ENCODE measurements at regions of chr11 and their contacts with region 1.

Region 1: GRCh38 chr11:119594639-119595249 is 134.3 kb downstream of the NECTIN1 start:
- DNase-seq: peak; percentile 85
- ATAC-seq: peak; percentile 28
- H3K4me3 ChIP-seq: no peak overlapping the region; the same call in 1 of the 2 replicates
- H3K27ac ChIP-seq: peak overlapping the region; percentile 73
- H3K4me1 ChIP-seq: peaks cover 62% of the 10 kb centered on the region
- H3K27me3 ChIP-seq: no peaks in the 10 kb centered on the region
- CTCF ChIP-seq: no peak

Region 2: GRCh38 chr11:118547132-118547531 is 1047.6 kb before region 1 on chr11:
- CTCF ChIA-PET with region 1: no interaction called
- POLR2A ChIA-PET with region 1: no interaction called
- intact Hi-C with region 1: no loop called
- DNase-seq: no peak
- ATAC-seq: no peak
- H3K4me3 ChIP-seq: no peak overlapping the region
- H3K27ac ChIP-seq: no peak overlapping the region
- H3K4me1 ChIP-seq: no peaks in the 10 kb centered on the region
- H3K27me3 ChIP-seq: no peaks in the 10 kb centered on the region
- CTCF ChIP-seq: no peak

Region 3: GRCh38 chr11:119550053-119550752 is 44.5 kb before region 1 on chr11:
- CTCF ChIA-PET with region 1: no interaction called
- POLR2A ChIA-PET with region 1: no interaction called
- intact Hi-C with region 1: no loop called
- DNase-seq: no peak
- ATAC-seq: no peak
- H3K4me3 ChIP-seq: no peak overlapping the region
- H3K27ac ChIP-seq: no peak overlapping the region
- H3K4me1 ChIP-seq: no peaks in the 10 kb centered on the region
- H3K27me3 ChIP-seq: no peaks in the 10 kb centered on the region
- CTCF ChIP-seq: no peak

Region 4: GRCh38 chr11:119615003-119615881 is 20.5 kb after region 1 on chr11:
- CTCF ChIA-PET with region 1: no interaction called
- POLR2A ChIA-PET with region 1: no interaction called
- intact Hi-C with region 1: loop called (anchors 2 kb)
- DNase-seq: peak; percentile 97
- ATAC-seq: peak; percentile 98
- H3K4me3 ChIP-seq: no peak overlapping the region
- H3K27ac ChIP-seq: peak overlapping the region; percentile 85
- H3K4me1 ChIP-seq: peaks cover 27% of the 10 kb centered on the region
- H3K27me3 ChIP-seq: no peaks in the 10 kb centered on the region
- CTCF ChIP-seq: no peak

Region 5: GRCh38 chr11:119728651-119729580 is 134.2 kb after region 1 on chr11 and contains the start of gene NECTIN1:
- CTCF ChIA-PET with region 1: no interaction called
- POLR2A ChIA-PET with region 1: no interaction called
- intact Hi-C with region 1: loop called (anchors 10 kb)
- DNase-seq: peak; percentile 86
- ATAC-seq: peak; percentile 77
- H3K4me3 ChIP-seq: peak within 1 kb of the TSS; percentile 97
- H3K27ac ChIP-seq: peak within 1 kb of the TSS; percentile 30; the same call in 1 of the 2 replicates
- H3K4me1 ChIP-seq: peaks cover 22% of the 10 kb centered on the region
- H3K27me3 ChIP-seq: no peaks in the 10 kb centered on the region
- CTCF ChIP-seq: peak; percentile 98
- total RNA-seq, gene NECTIN1: 19.9 and 24.6 TPM in 2 replicates

Measured in PC-3 (cell line).